ENCODE measurements at regions of chr3 and their contacts with region 1.

Region 1: GRCh38 chr3:101709126-101709525 is 15.3 kb upstream of the CEP97 start:
- DNase-seq: no peak
- H3K4me3 ChIP-seq: no peak overlapping the region
- CTCF ChIP-seq: no peak

Region 2: GRCh38 chr3:101676765-101677435 is 32.2 kb before region 1 on chr3 and contains the start of gene ZBTB11:
- CTCF ChIA-PET with region 1: interaction called, 35 read pairs
- POLR2A ChIA-PET with region 1: interaction called, 6 read pairs
- DNase-seq: peak; percentile 98
- H3K4me3 ChIP-seq: peak within 1 kb of the TSS; percentile 99
- CTCF ChIP-seq: peak; percentile 67

Region 3: GRCh38 chr3:101724329-101725193 is 15.4 kb after region 1 on chr3 and contains the start of gene CEP97:
- CTCF ChIA-PET with region 1: interaction called, 47 read pairs
- POLR2A ChIA-PET with region 1: no interaction called
- DNase-seq: peak; percentile 47
- H3K4me3 ChIP-seq: peak within 1 kb of the TSS; percentile 65
- CTCF ChIP-seq: no peak

Region 4: DNA sequence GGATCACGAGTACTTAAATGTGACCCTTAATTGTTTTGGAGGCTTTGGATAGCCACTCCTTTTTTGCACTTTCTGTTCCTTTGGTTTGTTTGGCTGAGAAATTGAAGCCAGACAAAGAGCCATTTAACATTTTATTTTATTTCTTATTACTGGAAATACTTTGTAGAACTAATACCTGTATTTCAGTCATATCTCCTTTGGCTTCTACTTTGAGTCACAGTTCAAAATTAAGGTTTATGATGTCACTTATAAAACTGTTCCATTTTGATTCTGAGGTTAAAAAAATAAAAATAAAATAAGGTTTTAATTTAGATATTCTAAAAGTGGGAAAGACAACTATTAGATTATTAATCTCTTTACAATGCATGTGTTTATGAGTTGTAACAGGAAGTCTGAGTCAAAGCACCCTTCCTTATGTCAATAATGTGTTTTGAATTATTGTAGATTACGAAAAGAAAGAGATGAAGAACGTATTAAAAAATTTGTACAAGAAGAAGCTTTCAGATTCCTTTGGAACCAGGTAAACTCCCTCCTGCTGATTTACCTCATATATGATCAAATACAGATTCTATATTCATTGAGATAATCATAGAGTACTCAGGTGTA is 53.0 kb after region 1 on chr3:
- CTCF ChIA-PET with region 1: no interaction called
- POLR2A ChIA-PET with region 1: no interaction called
- DNase-seq: no peak
- H3K4me3 ChIP-seq: no peak overlapping the region
- CTCF ChIP-seq: no peak

Region 5: GRCh38 chr3:102006812-102007485 is 297.8 kb after region 1 on chr3:
- CTCF ChIA-PET with region 1: no interaction called
- POLR2A ChIA-PET with region 1: no interaction called
- DNase-seq: peak; percentile 94
- H3K4me3 ChIP-seq: no peak overlapping the region
- CTCF ChIP-seq: no peak

Measured in AG04449 (cell line).